AG04450 (cell line): ENCODE measurements at regions of chr20 and their contacts with region 1.

Region 1: DNA sequence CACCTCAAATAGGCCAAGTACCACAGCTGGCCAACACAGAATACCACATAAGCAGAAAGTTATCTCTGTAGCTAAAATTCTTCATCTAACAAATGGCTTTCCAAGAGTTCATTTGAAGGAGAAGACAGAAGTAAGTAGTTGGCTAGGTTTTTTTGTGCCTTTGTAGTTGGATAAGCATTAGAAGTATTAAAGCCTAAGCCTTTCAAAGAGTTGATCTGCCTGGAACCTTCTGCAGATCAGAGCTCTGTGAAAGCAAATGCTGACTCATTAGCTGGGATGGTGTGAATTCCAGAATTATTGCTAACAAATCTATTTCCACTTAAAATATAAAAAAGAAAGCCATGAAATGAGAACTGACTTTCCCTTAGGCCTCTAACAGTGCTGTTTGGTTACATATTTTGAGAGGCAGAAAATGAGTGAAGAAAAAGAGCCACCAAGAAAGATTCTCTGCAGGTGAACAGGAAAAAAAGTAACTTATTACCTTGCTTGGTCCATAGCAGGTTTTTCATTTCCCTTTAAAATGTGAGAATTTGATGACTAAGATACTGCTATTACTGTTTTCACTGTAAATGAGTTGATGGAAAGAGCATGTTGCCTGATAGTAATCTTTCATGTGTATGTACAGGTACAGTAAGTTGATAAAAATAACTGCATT is 763.2 kb upstream of the FLRT3 start:
- DNase-seq: no peak
- H3K4me3 ChIP-seq: no peak overlapping the region
- H3K27ac ChIP-seq: no peak overlapping the region
- H3K27me3 ChIP-seq: no peaks in the 10 kb centered on the region
- CTCF ChIP-seq: no peak

Region 2: DNA sequence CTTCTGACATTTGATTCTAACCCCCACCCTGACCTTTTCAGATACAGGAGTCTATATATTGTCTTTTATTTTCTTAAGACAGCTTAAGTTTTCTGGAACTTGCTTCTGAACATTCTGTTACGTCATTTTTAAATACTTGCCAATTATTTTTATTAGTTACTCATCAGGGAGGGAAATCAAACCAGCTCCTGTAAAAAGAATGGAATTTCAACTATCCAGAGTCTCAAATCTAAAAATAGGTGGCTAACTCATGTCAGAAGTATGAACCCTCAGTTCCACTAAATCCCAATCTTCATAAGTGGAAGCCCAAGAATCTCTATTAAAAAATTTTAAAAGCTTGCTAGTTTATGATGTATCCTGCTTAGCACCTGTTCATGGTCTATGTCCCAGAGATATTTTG is 572.6 kb after region 1 on chr20:
- CTCF ChIA-PET with region 1: no interaction called
- POLR2A ChIA-PET with region 1: interaction called, 10 read pairs
- DNase-seq: peak; percentile 47
- H3K4me3 ChIP-seq: no peak overlapping the region
- H3K27ac ChIP-seq: no peak overlapping the region
- H3K27me3 ChIP-seq: no peaks in the 10 kb centered on the region
- CTCF ChIP-seq: no peak